CD4-positive, alpha-beta T cell (primary cell): ENCODE measurements at regions of chr3 and their contacts with region 1.

Region 1: DNA sequence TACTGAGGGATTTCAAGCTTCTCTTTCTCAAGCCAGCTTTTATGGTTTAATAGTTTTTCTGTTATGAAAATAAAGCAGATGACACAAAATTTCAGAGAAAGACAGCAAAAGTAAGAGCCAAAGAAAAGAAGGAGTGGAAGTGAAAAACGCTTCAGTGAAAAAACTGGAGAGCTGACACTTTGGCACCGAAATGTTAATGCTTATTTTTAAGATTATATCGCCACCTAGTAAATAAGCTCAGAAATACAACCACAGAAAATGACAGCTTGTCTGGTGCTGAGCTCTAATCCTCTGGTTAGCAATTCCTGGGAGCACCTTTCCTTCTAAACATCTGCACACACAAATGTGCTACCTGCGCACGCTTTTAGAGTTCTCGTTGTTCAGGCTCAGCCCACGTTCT is 101.6 kb downstream of the ZPLD1 start:
- DNase-seq: peak in 3 of 14 experiments; percentile 32 to 45 (median 42)
- ATAC-seq: no peak
- H3K4me3 ChIP-seq: no peak overlapping the region
- H3K4me3 Mint-ChIP-seq: no peak overlapping the region
- H3K27ac ChIP-seq: no peak overlapping the region
- H3K27ac Mint-ChIP-seq: no peak overlapping the region
- H3K4me1 ChIP-seq: no peaks in the 10 kb centered on the region
- H3K4me1 Mint-ChIP-seq: no peaks in the 10 kb centered on the region
- H3K27me3 ChIP-seq: no peaks in the 10 kb centered on the region
- H3K27me3 Mint-ChIP-seq: peaks cover 16% of the 10 kb centered on the region
- CTCF ChIP-seq: peak; percentile 37

Region 2: GRCh38 chr3:101695779-101696372 is 840.6 kb before region 1 on chr3:
- CTCF ChIA-PET with region 1: no interaction called
- POLR2A ChIA-PET with region 1: no interaction called
- intact Hi-C with region 1: loop called in 1 of 2 experiments (anchors 5 kb)
- DNase-seq: peak in 5 of 14 experiments; percentile 34 to 80 (median 72)
- ATAC-seq: no peak
- H3K4me3 ChIP-seq: no peak overlapping the region
- H3K4me3 Mint-ChIP-seq: no peak overlapping the region
- H3K27ac ChIP-seq: no peak overlapping the region
- H3K27ac Mint-ChIP-seq: no peak overlapping the region
- H3K4me1 ChIP-seq: no peaks in the 10 kb centered on the region
- H3K4me1 Mint-ChIP-seq: no peaks in the 10 kb centered on the region
- H3K27me3 ChIP-seq: no peaks in the 10 kb centered on the region
- H3K27me3 Mint-ChIP-seq: no peaks in the 10 kb centered on the region
- CTCF ChIP-seq: peak; percentile 93

Region 3: DNA sequence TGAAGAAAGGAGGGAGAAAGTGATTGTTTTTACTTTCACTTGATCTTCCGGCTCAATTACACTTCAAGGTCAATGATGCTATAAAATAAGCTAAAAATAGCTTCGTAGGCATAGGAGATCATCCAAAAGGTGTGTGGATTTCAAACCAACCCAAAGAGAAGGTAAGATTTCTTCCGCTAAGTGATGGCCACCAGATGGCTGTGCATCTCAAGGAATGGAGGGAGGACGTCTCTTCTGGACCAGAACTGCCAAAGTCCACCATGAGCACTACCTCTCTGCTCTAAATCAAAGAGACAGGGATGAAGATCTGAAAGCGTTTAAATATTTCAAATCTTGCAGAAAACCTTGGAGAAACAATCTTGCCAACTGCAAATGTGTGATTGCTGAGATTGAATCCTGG is 300.8 kb before region 1 on chr3:
- CTCF ChIA-PET with region 1: no interaction called
- POLR2A ChIA-PET with region 1: no interaction called
- intact Hi-C with region 1: loop called (anchors 1 to 2 kb)
- DNase-seq: peak in 2 of 14 experiments; percentile 3 to 35
- ATAC-seq: peak; percentile 60
- H3K4me3 ChIP-seq: no peak overlapping the region
- H3K4me3 Mint-ChIP-seq: no peak overlapping the region
- H3K27ac ChIP-seq: no peak overlapping the region
- H3K27ac Mint-ChIP-seq: no peak overlapping the region
- H3K4me1 ChIP-seq: no peaks in the 10 kb centered on the region
- H3K4me1 Mint-ChIP-seq: no peaks in the 10 kb centered on the region
- H3K27me3 ChIP-seq: no peaks in the 10 kb centered on the region
- H3K27me3 Mint-ChIP-seq: no peaks in the 10 kb centered on the region
- CTCF ChIP-seq: peak; percentile 83